ENCODE measurements at regions of chr6 and their contacts with region 1.

Region 1: GRCh38 chr6:2765166-2765895 is at the start of gene WRNIP1:
- DNase-seq: peak; percentile 96
- H3K4me3 Mint-ChIP-seq: peak within 1 kb of the TSS; percentile 90
- H3K27ac Mint-ChIP-seq: peak within 1 kb of the TSS; percentile 98
- H3K4me1 Mint-ChIP-seq: peaks cover 47% of the 10 kb centered on the region
- H3K27me3 Mint-ChIP-seq: no peaks in the 10 kb centered on the region
- total RNA-seq, gene WRNIP1: 47.2 and 47.8 TPM in 2 replicates

Region 2: DNA sequence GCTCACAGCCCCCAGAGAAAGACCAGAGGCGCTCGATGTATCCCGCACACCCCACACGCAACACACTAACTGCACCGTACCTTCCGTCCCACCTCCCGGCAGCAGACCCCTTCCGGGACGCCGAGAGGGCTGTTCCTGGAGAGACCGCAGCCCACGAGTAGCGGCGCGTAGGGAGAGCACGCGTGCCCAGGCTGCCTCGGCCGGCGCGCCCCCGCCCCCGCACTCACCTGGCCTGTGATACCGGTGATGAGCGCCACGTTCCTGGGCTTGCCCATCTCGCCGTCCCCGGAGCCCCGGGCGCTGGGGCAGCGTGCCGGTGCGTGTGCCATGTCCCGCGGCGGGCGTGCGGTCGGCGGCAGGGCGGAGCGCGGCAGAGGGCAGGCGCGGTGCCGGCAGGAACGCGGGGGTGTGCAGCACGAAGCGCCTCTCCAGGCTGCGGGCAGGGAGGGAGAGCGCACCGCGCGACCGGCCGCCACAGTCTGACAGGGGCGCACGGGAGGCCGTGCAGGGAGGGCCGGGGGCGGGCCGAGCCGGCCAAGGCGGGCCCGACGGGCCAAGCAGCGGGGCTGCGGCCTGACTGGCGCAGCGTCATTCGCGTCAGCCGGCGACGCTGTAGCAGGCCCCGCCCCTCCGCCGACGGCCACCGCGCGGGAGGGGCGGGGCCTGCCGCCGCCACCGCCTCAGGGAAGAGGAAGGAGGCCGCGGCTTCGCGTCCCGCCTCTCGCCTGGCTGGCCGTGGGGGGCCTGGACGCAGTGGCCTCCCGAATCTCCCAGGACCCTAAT is 520.0 kb before region 1 on chr6 and contains the start of gene GMDS:
- intact Hi-C with region 1: loop called (anchors 10 kb)
- DNase-seq: peak; percentile 79
- H3K4me3 Mint-ChIP-seq: peak within 1 kb of the TSS; percentile 90
- H3K27ac Mint-ChIP-seq: peak within 1 kb of the TSS; percentile 94
- H3K4me1 Mint-ChIP-seq: peaks cover 65% of the 10 kb centered on the region
- H3K27me3 Mint-ChIP-seq: no peaks in the 10 kb centered on the region
- total RNA-seq, gene GMDS: 35.7 and 36.9 TPM in 2 replicates

Region 3: GRCh38 chr6:2841264-2842138 is 76.2 kb after region 1 on chr6 and contains the start of gene SERPINB1:
- intact Hi-C with region 1: loop called (anchors 1 kb)
- DNase-seq: peak; percentile 76
- H3K4me3 Mint-ChIP-seq: peak within 1 kb of the TSS; percentile 89
- H3K27ac Mint-ChIP-seq: peak within 1 kb of the TSS; percentile 89
- H3K4me1 Mint-ChIP-seq: peaks cover 50% of the 10 kb centered on the region
- H3K27me3 Mint-ChIP-seq: no peaks in the 10 kb centered on the region
- total RNA-seq, gene SERPINB1: 102 and 103 TPM in 2 replicates

Region 4: DNA sequence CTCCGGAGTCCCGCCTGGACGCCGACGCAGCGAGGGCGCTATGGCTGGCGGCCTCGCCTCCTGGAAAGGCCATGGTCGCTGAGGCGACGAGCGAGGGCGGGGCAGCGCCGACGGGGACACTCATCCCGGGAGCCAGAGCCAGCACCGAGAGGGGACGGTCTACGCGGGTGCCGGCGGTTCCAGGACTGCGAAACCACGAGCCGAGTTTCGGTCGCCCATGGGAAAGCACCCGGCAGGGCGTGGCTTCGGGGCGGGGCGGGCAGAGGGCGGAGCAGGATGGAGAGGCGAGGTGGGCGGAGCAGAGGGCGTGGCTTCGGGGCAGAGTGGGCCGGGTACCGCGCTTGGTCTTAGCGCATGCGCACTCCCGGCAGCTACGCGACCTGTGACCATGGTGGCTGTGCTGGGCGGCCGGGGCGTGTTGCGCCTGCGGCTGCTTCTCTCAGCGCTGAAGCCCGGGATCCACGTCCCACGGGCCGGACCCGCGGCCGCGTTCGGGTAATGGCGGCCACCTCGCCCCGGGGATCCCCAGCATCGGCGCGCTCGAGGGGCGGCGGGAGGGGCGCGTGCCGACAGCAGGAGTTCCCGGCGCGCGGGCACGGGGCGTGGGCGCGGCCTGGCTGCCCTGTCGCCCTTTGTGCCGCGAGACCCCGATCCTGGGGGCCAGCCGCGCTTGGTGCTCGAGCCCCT is 353.2 kb after region 1 on chr6 and contains the start of gene BPHL:
- intact Hi-C with region 1: loop called (anchors 2 kb)
- DNase-seq: peak; percentile 98
- H3K4me3 Mint-ChIP-seq: peak within 1 kb of the TSS; percentile 80
- H3K27ac Mint-ChIP-seq: peak within 1 kb of the TSS; percentile 81
- H3K4me1 Mint-ChIP-seq: peaks cover 16% of the 10 kb centered on the region
- H3K27me3 Mint-ChIP-seq: no peaks in the 10 kb centered on the region
- total RNA-seq, gene BPHL: 12.1 and 15.8 TPM in 2 replicates

Region 5: DNA sequence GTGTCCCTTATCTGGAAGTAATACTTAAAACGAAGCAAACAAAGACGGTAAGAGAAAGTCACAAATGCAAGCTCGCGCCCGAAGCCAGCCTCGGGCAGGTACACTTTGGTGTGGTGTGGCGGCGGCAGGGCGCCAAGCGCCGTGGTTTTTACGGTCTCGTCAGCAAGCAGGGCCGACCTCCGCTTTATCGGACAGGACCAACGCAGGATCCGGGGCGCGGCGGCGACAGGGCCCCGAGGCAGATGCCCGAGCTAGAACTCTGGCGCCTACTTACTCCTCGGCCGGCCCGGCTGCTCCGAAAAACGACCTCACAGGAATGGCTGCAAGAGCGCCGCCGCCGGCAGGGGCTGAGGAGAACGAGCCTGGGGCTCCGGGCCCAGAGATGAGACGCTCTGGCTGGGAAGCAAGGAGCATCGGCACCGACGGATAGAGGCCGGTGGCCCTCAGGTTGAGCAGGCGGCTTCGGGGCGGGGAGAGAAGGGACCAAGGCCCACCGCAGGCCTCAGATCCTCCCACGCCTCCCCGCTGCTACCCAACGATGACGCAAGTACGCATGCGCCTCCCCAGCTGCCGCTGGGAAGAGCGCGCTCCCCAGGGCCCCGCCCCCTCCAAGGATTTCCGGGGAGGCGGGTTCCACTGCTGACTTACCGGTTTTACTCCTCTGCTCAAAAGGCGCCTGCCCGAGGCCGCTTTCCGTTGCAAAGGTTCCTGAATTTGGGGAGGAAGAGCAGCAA is 1253.0 kb after region 1 on chr6:
- intact Hi-C with region 1: loop called (anchors 10 kb)
- DNase-seq: peak; percentile 95
- H3K4me3 Mint-ChIP-seq: peak overlapping the region; percentile 98
- H3K27ac Mint-ChIP-seq: peak overlapping the region; percentile 99
- H3K4me1 Mint-ChIP-seq: peaks cover 46% of the 10 kb centered on the region
- H3K27me3 Mint-ChIP-seq: no peaks in the 10 kb centered on the region